SK-N-SH (cell line): ENCODE measurements at regions of chr16 and their contacts with region 1.

Region 1: GRCh38 chr16:27235055-27235937 is 32.0 kb downstream of the KDM8 start:
- DNase-seq: peak; percentile 71
- H3K4me3 ChIP-seq: no peak overlapping the region; a peak in 1 of 4 replicates
- H3K27ac ChIP-seq: peak overlapping the region; percentile 57 to 73
- H3K4me1 ChIP-seq: peaks cover 20 to 31% of the 10 kb centered on the region in 2 experiments; a peak in 3 of 4 replicates
- H3K27me3 ChIP-seq: no peaks in the 10 kb centered on the region
- CTCF ChIP-seq: peak; percentile 98
- EP300 ChIP-seq: no peak
- RAD21 ChIP-seq: peak; percentile 76

Region 2: GRCh38 chr16:26214581-26215174 is 1020.6 kb before region 1 on chr16:
- CTCF ChIA-PET with region 1: no interaction called
- POLR2A ChIA-PET with region 1: no interaction called
- DNase-seq: no peak
- H3K4me3 ChIP-seq: no peak overlapping the region
- H3K27ac ChIP-seq: no peak overlapping the region
- H3K4me1 ChIP-seq: no peaks in the 10 kb centered on the region
- H3K27me3 ChIP-seq: no peaks in the 10 kb centered on the region
- CTCF ChIP-seq: no peak
- EP300 ChIP-seq: no peak
- RAD21 ChIP-seq: no peak

Region 3: GRCh38 chr16:27179500-27180072 is 55.7 kb before region 1 on chr16:
- CTCF ChIA-PET with region 1: interaction called, 27 read pairs
- POLR2A ChIA-PET with region 1: no interaction called
- DNase-seq: peak; percentile 77
- H3K4me3 ChIP-seq: no peak overlapping the region; a peak in 1 of 4 replicates
- H3K27ac ChIP-seq: no peak overlapping the region
- H3K4me1 ChIP-seq: peaks cover 0 to 5% of the 10 kb centered on the region in 2 experiments; a peak in 2 of 4 replicates
- H3K27me3 ChIP-seq: no peaks in the 10 kb centered on the region
- CTCF ChIP-seq: peak; percentile 75
- EP300 ChIP-seq: no peak
- RAD21 ChIP-seq: peak; percentile 78

Region 4: DNA sequence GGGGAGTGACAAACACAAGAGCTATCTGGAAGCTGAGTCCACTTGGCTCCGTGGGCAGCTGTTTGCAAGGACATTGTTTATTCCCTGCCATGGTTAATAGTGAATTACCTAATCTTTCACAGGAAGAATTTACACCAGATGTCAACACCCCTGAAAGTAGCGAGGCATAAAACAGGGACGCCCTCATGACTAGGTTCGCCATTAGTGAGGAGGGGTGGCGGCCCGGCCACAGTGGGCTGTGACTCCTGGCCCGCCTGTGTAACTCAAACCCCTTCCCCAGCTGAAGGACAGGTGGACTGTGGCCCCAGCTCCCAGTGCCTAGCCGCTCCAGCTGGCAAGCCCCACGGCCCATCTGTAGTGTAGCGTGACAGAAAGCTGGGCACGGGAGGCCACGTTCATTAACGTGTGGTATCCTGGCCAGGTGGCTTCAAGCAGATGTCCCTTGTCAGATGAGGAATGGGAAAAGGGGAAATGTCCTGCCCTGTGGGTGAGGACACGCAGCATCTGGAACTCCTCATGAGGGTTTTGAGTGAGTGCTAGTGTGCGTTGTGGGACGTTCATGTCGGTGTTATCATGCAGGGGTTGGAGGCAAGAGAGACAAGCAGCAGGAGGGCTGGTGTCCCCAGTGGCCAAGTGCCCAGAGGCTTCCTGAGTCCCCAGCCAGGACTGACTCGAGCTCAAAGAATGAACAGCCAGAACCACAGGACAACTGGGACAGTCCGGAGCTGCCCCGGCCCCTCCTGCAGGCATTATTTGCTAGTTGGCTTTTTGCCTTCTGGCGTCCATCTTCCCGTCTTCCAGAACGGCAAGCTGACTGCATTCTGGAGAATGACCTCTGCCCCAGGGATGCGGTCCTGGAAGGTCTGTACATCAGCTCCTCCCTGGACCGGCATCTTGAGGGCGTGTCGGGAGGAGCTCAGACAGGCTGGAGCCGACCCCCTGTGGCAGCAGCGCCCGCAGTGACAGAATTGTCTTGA is 12.8 kb before region 1 on chr16:
- CTCF ChIA-PET with region 1: interaction called, 66 read pairs
- POLR2A ChIA-PET with region 1: no interaction called
- DNase-seq: peak; percentile 51
- H3K4me3 ChIP-seq: no peak overlapping the region
- H3K27ac ChIP-seq: peak overlapping the region in 1 of 2 experiments; percentile 7; a peak in 2 of 4 replicates
- H3K4me1 ChIP-seq: peaks cover 0 to 19% of the 10 kb centered on the region in 2 experiments; a peak in 1 of 4 replicates
- H3K27me3 ChIP-seq: no peaks in the 10 kb centered on the region
- CTCF ChIP-seq: no peak
- EP300 ChIP-seq: no peak
- RAD21 ChIP-seq: no peak

Region 5: DNA sequence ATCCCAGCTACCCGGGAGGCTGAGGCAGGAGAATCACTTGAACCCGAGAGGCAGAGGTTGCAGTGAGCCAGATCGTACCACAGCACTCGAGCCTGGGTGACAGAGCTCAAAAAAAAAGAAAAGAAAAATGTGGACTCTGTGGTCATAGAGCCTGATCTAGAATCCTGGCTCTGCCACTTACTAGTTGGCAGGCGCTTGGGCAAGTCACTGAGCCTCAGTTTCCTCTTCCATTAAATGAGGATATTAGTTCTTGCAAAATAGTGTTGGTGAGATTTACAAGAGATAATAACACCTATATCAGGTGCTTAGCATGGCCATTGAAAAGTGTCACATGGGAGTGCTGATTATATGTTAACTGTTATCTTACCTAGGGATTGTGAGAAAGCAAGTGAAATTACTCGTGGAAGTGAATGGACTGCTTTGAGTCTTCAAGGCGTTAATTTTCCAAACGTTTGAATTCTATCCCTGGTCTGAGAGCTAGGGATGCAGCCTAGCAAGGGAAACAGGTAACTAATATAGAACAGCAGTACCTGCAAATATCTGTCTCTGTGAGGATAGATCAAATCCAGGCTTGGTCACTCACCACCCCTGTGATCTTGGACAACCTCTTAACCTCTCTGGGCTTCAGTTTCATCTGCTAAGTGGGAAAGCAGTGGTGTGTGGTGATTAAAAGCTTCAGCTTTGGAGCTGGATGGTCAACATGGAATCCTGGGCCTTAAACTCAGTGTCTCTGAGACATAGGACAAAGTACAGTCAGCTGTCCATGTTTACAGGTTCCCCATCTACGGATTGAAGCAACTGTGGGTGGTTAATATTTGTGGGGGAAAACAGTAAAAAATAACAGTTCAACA is 34.2 kb after region 1 on chr16:
- CTCF ChIA-PET with region 1: interaction called, 10 read pairs
- POLR2A ChIA-PET with region 1: no interaction called
- DNase-seq: no peak
- H3K4me3 ChIP-seq: peak overlapping the region; percentile 73 to 78
- H3K27ac ChIP-seq: no peak overlapping the region
- H3K4me1 ChIP-seq: peaks cover 4 to 6% of the 10 kb centered on the region in 2 experiments; a peak in 2 of 4 replicates
- H3K27me3 ChIP-seq: no peaks in the 10 kb centered on the region
- CTCF ChIP-seq: no peak
- EP300 ChIP-seq: no peak
- RAD21 ChIP-seq: no peak

Region 6: DNA sequence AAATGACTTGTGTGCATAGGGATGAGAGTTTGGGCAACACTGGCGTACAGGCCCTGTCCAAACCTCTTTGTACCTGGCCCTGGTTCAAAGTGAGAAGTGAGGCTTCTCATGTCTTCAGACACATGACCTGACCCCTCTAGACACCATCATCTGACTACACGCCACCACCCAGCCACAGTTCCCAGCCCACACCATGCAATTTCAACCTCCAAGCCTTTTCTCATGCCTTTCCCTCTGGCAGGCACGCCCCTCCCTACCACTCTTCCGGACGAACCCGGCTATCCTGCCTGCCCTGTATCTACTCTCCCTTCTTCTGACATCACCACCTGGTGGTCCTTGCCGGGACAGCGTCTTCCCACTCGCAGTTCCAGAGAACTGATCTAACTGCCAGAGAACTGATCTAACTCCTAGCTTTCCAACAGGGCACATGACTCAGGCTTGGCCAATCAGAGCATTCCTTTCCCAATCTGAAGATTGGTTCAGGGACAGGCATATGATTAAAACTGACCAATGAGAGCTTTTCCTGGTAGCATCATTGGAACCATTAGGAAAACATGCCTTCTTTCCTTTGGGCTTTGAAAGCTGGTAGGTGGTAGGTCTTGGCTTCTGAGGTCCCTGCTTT is 139.6 kb after region 1 on chr16:
- CTCF ChIA-PET with region 1: interaction called, 104 read pairs
- POLR2A ChIA-PET with region 1: no interaction called
- DNase-seq: peak; percentile 76
- H3K4me3 ChIP-seq: no peak overlapping the region
- H3K27ac ChIP-seq: no peak overlapping the region
- H3K4me1 ChIP-seq: no peaks in the 10 kb centered on the region
- H3K27me3 ChIP-seq: no peaks in the 10 kb centered on the region; the same call in 1 of the 2 replicates
- CTCF ChIP-seq: peak; percentile 63
- EP300 ChIP-seq: no peak
- RAD21 ChIP-seq: peak; percentile 49